WTC11 (cell line): ENCODE measurements at regions of chr19 and their contacts with region 1.

Region 1: DNA sequence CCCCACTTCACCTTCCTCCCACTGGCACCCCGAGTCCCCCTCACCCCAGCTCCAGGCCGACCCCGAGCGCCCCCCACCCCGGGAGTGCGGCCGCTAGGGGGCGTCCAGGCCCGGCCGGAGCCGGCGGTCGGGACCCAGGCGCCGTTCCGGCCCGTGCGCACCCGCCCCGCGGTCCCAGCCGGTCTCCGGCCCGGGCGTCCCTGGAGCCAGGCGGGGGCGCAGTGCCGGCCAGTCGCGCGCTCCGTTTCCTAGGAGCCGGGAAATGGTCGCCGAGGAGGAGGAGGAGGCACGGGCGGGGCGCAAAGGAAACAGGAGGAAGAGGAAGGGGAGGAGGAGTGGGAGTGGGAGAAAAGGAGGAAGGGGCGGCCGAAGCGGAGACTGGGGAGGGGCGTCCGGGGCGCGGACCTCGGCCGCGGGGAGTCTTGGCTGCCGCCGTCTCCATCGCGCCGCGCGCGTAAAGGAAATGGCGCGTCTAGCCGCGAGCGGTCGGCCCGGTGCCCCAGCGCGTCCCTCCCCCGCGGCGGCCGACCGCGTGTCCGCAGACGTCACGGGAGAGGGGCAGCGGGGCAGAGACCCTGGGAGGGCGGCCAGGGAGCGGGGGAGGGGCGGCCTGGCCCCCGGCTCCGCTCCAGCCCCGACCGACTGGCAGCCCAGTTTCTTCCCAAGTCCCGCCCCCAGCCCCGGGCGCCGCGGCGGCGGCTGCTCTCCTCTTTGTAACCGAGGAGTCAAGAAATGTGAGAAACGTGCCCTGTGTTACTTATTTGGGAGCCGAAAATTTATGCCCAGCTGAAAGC is 1.1 kb upstream of the KCTD15 start:
- DNase-seq: peak; percentile 88
- ATAC-seq: peak; percentile 66
- H3K4me3 Mint-ChIP-seq: peak overlapping the region; percentile 68
- H3K27ac Mint-ChIP-seq: no peak overlapping the region; the same call in 1 of the 2 replicates
- H3K4me1 Mint-ChIP-seq: peaks cover 45% of the 10 kb centered on the region
- H3K27me3 Mint-ChIP-seq: 0 out of 2 replicates have a peak, but pooled peaks cover 3% of the 10 kb centered on the region
- CTCF ChIP-seq: peak; percentile 75

Region 2: GRCh38 chr19:33752018-33752800 is 43.4 kb before region 1 on chr19:
- CTCF ChIA-PET with region 1: no interaction called
- POLR2A ChIA-PET with region 1: no interaction called
- DNase-seq: no peak
- ATAC-seq: no peak
- H3K4me3 Mint-ChIP-seq: no peak overlapping the region
- H3K27ac Mint-ChIP-seq: no peak overlapping the region
- H3K4me1 Mint-ChIP-seq: no peaks in the 10 kb centered on the region
- H3K27me3 Mint-ChIP-seq: no peaks in the 10 kb centered on the region
- CTCF ChIP-seq: no peak

Region 3: DNA sequence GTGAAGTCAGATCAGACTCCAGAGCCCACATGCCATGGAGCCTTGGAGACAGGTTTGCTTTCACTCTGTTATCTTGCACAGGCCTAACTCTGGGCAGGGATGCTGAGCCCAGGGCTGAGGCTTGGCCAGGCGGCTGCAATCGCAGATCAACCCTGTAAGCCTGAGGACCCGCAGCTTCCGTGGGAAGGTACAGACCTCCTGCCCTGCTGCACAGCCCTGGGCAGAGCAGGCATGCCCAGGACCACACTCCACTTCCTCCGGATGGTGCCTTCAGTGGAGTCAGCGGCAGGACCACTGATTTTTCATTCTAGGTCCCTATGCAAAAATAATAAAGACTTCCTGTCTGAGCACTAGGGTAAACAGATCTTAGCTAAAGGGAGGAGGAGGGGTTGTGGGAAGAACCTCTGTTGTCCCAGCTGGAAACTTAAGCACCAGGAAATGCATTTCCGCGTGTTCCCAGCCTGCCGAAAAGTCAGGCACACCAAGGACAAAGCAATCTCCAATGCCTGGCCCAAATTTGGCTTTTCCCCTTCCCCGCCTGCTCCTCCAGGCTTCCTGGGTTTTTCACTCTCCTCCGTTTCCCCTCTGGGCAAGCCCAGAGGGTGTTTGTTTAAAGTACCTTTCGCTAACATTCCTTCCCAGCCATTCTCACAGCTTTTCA is 88.4 kb after region 1 on chr19:
- CTCF ChIA-PET with region 1: interaction called, 12 read pairs
- POLR2A ChIA-PET with region 1: no interaction called
- DNase-seq: peak; percentile 56
- ATAC-seq: peak; percentile 79
- H3K4me3 Mint-ChIP-seq: peak overlapping the region; percentile 57
- H3K27ac Mint-ChIP-seq: peak overlapping the region; percentile 97
- H3K4me1 Mint-ChIP-seq: peaks cover 49% of the 10 kb centered on the region
- H3K27me3 Mint-ChIP-seq: no peaks in the 10 kb centered on the region
- CTCF ChIP-seq: no peak

Region 4: GRCh38 chr19:33905937-33906576 is 110.5 kb after region 1 on chr19:
- CTCF ChIA-PET with region 1: interaction called, 19 read pairs
- POLR2A ChIA-PET with region 1: interaction called, 22 read pairs
- DNase-seq: peak; percentile 84
- ATAC-seq: peak; percentile 72
- H3K4me3 Mint-ChIP-seq: peak overlapping the region; percentile 82
- H3K27ac Mint-ChIP-seq: peak overlapping the region; percentile 98; the same call in 1 of the 2 replicates
- H3K4me1 Mint-ChIP-seq: peaks cover 48% of the 10 kb centered on the region
- H3K27me3 Mint-ChIP-seq: peaks cover 7% of the 10 kb centered on the region
- CTCF ChIP-seq: no peak

Region 5: DNA sequence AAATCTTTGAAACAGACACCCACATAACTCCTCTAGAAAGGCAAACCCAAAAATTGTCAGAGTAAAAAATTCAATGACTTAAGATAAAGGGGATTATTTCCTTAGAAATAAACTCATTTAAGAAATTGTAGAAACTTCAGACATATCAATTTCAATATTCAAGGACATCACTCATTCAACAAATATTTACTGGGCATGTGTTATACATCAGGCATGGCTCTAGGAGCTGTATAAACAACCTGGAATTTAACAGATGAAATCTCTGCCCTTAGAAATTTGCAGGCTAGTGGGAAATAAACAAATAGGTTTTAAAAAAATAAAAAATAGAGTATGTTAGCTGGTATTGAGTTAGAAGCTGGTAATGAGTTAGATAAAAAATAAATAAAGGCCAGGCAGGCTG is 292.7 kb after region 1 on chr19:
- CTCF ChIA-PET with region 1: interaction called, 11 read pairs
- POLR2A ChIA-PET with region 1: no interaction called
- DNase-seq: no peak
- ATAC-seq: no peak
- H3K4me3 Mint-ChIP-seq: no peak overlapping the region
- H3K27ac Mint-ChIP-seq: peak overlapping the region; percentile 10; the same call in 1 of the 2 replicates
- H3K4me1 Mint-ChIP-seq: peaks cover 27% of the 10 kb centered on the region
- H3K27me3 Mint-ChIP-seq: no peaks in the 10 kb centered on the region
- CTCF ChIP-seq: no peak